ENCODE measurements at regions of chr9 and their contacts with region 1.

Region 1: GRCh38 chr9:32015795-32016194 is 368.6 kb upstream of the ACO1 start:
- DNase-seq: no peak
- H3K4me3 ChIP-seq: no peak overlapping the region
- H3K27ac ChIP-seq: no peak overlapping the region
- H3K4me1 ChIP-seq: no peaks in the 10 kb centered on the region
- CTCF ChIP-seq: no peak

Region 2: GRCh38 chr9:31950756-31951155 is 65.0 kb before region 1 on chr9:
- CTCF ChIA-PET with region 1: no interaction called
- POLR2A ChIA-PET with region 1: no interaction called
- intact Hi-C with region 1: loop called (anchors 10 kb)
- DNase-seq: no peak
- H3K4me3 ChIP-seq: no peak overlapping the region
- H3K27ac ChIP-seq: no peak overlapping the region
- H3K4me1 ChIP-seq: no peaks in the 10 kb centered on the region
- CTCF ChIP-seq: no peak

Region 3: GRCh38 chr9:32004431-32005076 is 11.2 kb before region 1 on chr9:
- CTCF ChIA-PET with region 1: no interaction called
- POLR2A ChIA-PET with region 1: no interaction called
- intact Hi-C with region 1: no loop called
- DNase-seq: no peak
- H3K4me3 ChIP-seq: no peak overlapping the region
- H3K27ac ChIP-seq: no peak overlapping the region
- H3K4me1 ChIP-seq: no peaks in the 10 kb centered on the region
- CTCF ChIP-seq: no peak

Region 4: GRCh38 chr9:32067261-32067660 is 51.5 kb after region 1 on chr9:
- CTCF ChIA-PET with region 1: no interaction called
- POLR2A ChIA-PET with region 1: no interaction called
- intact Hi-C with region 1: no loop called
- DNase-seq: no peak
- H3K4me3 ChIP-seq: no peak overlapping the region
- H3K27ac ChIP-seq: no peak overlapping the region
- H3K4me1 ChIP-seq: no peaks in the 10 kb centered on the region
- CTCF ChIP-seq: no peak

Region 5: DNA sequence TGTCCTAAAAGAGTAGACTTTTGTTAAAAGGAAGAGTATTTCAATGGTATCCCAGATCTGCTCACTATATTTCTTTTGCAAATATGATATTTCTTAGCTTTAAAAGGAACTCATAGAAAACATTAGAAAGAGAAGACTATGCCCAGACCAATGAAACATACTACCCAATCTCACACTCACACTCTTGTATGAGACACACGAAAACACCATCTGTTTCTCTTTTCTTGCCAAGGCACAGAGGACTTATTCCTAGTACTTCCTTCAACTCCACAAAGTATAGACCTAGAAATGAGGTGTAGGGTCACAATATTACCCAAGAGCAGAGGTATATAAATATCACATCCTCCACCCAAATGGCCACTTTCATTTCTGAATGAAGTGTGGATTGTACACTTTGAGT is 76.2 kb after region 1 on chr9:
- CTCF ChIA-PET with region 1: no interaction called
- POLR2A ChIA-PET with region 1: no interaction called
- intact Hi-C with region 1: loop called (anchors 10 kb)
- DNase-seq: no peak
- H3K4me3 ChIP-seq: no peak overlapping the region
- H3K27ac ChIP-seq: no peak overlapping the region
- H3K4me1 ChIP-seq: no peaks in the 10 kb centered on the region
- CTCF ChIP-seq: no peak

Measured in OCI-LY7 (cell line).